Heart left ventricle (tissue), 16 donors: ENCODE measurements at regions of chr9 and their contacts with region 1.

Region 1: DNA sequence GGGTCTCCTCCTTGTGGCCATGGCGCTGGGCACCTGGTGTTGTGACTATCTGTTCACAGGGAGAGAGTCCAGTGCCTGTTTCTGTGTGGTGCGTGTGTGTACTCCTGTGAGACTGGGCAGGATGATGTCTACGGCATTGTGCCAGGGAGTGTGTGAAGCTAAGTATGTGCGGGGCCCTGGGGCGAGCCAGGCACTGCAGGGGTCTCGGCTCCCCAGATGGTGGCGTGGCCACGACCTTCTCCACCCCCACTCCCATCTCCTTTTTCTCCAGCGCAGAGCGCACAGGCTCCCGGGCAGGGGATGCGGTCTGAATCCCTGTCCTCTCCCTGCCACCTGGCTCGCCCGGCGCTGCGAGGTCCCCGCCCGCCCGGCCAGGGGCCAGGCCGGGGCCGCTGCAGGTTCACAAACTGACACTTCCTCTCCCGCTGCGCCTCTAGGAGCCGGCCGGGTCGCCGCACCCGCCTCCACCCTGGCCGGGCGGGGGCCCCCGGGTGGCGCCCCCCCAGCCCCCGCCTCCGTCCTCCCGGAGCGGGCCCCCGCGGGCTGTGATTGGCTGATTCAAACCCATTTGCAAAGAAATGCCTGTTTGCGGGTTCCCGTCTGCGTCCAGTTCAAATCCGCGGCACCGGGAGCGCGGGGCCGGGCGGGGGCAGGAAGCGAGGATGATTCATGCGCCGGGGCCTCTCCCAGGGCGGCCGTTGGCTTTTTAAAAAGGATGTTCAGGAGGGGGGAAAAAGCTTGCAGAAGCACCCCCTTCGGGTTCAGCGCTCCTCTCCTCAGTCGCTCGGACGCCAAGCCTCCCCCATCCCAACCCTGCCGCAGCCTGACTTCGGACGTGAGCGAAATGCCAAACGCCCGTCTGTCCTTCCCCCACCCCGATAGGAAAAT is 790 bp downstream of the PHF19 start:
- DNase-seq: peak; percentile 84 to 92 (median 88)
- ATAC-seq: peak; percentile 38 to 84 (median 82)
- H3K4me3 ChIP-seq: peak overlapping the region; percentile 42 to 86 (median 75)
- H3K27ac ChIP-seq: peak overlapping the region; percentile 82 to 97 (median 92)
- H3K4me1 ChIP-seq: peaks cover 0 to 20% (median 6%) of the 10 kb centered on the region in 12 donors
- H3K27me3 ChIP-seq: no peaks in the 10 kb centered on the region
- CTCF ChIP-seq: peak in 1 of 12 donors; percentile 4
- POLR2A ChIP-seq: peak in 1 of 2 donors; percentile 43

Region 2: DNA sequence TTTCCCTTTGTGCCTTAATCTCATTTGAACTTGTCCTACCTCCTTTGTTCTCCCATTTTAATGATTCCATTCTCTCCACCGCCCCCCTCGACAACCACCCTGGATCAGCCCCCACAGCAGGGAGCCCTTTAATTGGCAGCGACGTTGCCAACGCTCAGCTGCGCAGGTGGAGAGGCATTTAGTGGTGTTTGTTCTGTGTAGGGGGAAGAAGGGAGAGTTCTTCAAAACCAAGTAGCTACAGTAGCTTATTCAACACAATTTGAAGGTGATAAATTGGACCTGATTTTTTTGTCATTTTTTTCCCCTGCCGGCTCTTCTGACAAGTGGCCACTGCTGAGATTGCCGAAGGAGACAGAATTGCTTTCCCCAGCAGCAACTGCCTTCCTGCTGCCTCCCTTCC is 795.3 kb before region 1 on chr9:
- intact Hi-C with region 1: no loop called
- DNase-seq: no peak
- ATAC-seq: no peak
- H3K4me3 ChIP-seq: no peak overlapping the region
- H3K27ac ChIP-seq: no peak overlapping the region
- H3K4me1 ChIP-seq: no peaks in the 10 kb centered on the region
- H3K27me3 ChIP-seq: peaks cover 0 to 14% (median 0%) of the 10 kb centered on the region in 9 donors
- CTCF ChIP-seq: no peak
- POLR2A ChIP-seq: no peak

Region 3: DNA sequence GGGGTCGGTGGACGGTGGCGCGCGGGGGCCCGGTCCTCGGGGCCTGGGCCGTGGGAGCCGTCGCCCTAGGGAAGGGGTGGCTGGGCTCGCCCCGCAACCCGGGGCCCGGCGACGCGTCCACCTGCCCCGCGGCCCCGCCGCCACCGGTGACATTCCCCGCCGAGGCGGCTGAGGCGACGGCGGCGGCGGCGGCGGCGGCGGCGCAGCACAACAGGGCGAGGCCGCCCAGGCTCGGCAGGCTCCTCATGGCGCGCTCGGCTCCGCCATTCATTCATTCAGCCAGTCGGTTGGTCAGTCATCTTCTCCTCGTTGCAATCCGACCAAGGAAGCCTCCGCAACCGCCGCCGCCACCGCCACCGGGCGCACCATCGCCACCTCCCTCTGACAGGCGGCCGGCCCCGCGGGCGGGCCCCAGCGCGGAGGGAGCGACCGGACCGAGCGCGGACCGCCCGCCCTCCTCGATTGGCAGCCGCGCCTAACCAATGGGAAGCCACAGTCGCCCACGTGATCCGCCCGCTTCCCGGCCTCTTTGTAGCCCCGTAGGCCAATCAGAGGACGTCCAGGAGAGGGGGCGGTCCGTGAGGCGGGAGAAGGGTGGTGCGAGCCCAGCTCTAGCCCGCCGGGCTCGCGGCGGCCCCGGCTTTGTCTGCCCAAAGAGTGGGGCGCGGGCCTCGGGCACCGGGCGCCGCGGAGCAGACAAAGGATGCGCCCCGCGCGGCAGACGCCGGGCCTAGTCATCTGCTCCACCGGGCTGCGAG is 161.9 kb before region 1 on chr9 and contains the start of gene MEGF9:
- intact Hi-C with region 1: loop called in 1 of 10 experiments (anchors 10 kb)
- DNase-seq: peak; percentile 99
- ATAC-seq: peak; percentile 99
- H3K4me3 ChIP-seq: peak within 1 kb of the TSS; percentile 68 to 96 (median 78)
- H3K27ac ChIP-seq: peak within 1 kb of the TSS in 11 of 12 donors; percentile 14 to 91 (median 75)
- H3K4me1 ChIP-seq: peaks cover 0 to 49% (median 24%) of the 10 kb centered on the region in 12 donors
- H3K27me3 ChIP-seq: no peaks in the 10 kb centered on the region
- CTCF ChIP-seq: peak in 1 of 12 donors; percentile 5
- POLR2A ChIP-seq: peak in 1 of 2 donors; percentile 88
- total RNA-seq, gene MEGF9: 5.0 to 46.0 (median 13.3) TPM

Region 4: GRCh38 chr9:120842690-120843499 is 33.3 kb before region 1 on chr9 and contains the start of gene PSMD5:
- intact Hi-C with region 1: loop called in 1 of 10 experiments (anchors 5 kb)
- DNase-seq: peak; percentile 98 to 100 (median 99)
- ATAC-seq: peak; percentile 99
- H3K4me3 ChIP-seq: peak within 1 kb of the TSS; percentile 60 to 95 (median 78)
- H3K27ac ChIP-seq: peak within 1 kb of the TSS; percentile 83 to 99 (median 94)
- H3K4me1 ChIP-seq: peaks cover 0 to 44% (median 17%) of the 10 kb centered on the region in 12 donors
- H3K27me3 ChIP-seq: no peaks in the 10 kb centered on the region
- CTCF ChIP-seq: peak in 3 of 12 donors; percentile 11 to 27 (median 13)
- POLR2A ChIP-seq: peak; percentile 34 to 84
- total RNA-seq, gene PSMD5: 10.2 to 17.9 (median 13.4) TPM

Region 5: GRCh38 chr9:120928483-120929228 is 52.5 kb after region 1 on chr9:
- intact Hi-C with region 1: loop called in 3 of 10 experiments (anchors 5 kb)
- DNase-seq: peak; percentile 80 to 92 (median 84)
- ATAC-seq: peak; percentile 75 to 93 (median 90)
- H3K4me3 ChIP-seq: peak overlapping the region; percentile 57 to 92 (median 78)
- H3K27ac ChIP-seq: peak overlapping the region; percentile 81 to 98 (median 92)
- H3K4me1 ChIP-seq: peaks cover 0 to 93% (median 32%) of the 10 kb centered on the region in 12 donors
- H3K27me3 ChIP-seq: no peaks in the 10 kb centered on the region
- CTCF ChIP-seq: peak in 5 of 12 donors; percentile 5 to 36 (median 17)
- POLR2A ChIP-seq: peak; percentile 5 to 53